GM13976 (cell line): ENCODE measurements at regions of chr11 and their contacts with region 1.

Region 1: GRCh38 chr11:8006349-8006977 is 19.3 kb downstream of the EIF3F start:
- DNase-seq: peak; percentile 69
- CTCF ChIP-seq: peak; percentile 89

Region 2: GRCh38 chr11:8099291-8099899 is 92.9 kb after region 1 on chr11:
- in situ Hi-C with region 1: loop called (anchors 10 kb)
- DNase-seq: peak; percentile 72
- CTCF ChIP-seq: peak; percentile 83